Activated CD8-positive, alpha-beta T cell treated with anti-CD3 and anti-CD28 coated beads for 36 hours (primary cell): ENCODE measurements at regions of chr7 and their contacts with region 1.

Region 1: DNA sequence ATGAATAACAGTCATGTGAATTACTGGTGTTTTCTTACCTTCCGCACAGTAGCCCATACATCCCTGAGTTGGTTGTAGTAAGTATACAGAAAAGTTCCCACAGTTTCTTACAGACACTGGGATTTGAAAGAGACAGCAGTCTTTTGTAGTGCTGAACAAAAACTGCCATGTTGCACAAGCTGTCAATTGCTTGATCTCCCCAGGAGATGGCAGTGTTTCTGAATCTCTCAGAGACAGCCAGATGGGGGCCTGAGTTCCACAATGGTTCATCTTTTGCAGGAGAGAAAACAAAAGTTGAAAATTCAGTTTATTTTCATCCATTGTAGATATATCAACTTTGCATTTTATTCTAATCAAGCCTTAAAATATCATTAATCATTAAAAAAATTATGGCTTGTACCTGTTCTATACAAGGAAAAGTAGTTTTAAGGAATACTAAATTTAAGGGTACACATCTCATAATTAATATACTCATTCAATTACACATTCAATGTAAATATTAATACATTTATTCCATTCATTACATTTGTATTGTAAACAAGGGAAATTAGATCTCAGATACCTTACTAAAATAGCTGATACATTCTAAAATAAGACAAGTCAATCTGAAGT is 14.5 kb downstream of the VWDE start:
- DNase-seq: peak; percentile 62
- ATAC-seq: peak; percentile 94
- H3K4me3 Mint-ChIP-seq: no peak overlapping the region
- H3K27ac Mint-ChIP-seq: no peak overlapping the region
- H3K4me1 Mint-ChIP-seq: no peaks in the 10 kb centered on the region
- H3K27me3 Mint-ChIP-seq: no peaks in the 10 kb centered on the region
- CTCF ChIP-seq: peak; percentile 81

Region 2: DNA sequence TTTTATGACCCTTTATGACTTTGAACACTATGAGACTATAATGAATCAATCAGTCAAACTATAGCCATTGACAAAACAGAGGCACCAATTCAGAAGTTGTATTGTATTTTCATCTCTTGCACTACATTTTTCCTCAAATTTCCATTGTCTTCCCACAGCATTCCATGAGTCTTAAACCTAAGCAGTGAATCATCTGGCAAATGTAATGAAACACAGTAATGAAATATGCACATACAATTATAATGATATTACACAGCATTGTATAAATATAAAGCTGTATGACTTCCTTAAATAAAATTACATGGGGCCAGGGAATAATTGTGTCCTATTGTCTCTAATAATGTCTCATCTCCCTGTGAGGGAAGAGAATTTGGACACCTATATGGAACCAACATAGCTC is 30.5 kb before region 1 on chr7:
- CTCF ChIA-PET with region 1: interaction called, 11 read pairs
- POLR2A ChIA-PET with region 1: no interaction called
- intact Hi-C with region 1: no loop called
- DNase-seq: no peak
- ATAC-seq: no peak
- H3K4me3 Mint-ChIP-seq: no peak overlapping the region
- H3K27ac Mint-ChIP-seq: no peak overlapping the region
- H3K4me1 Mint-ChIP-seq: no peaks in the 10 kb centered on the region
- H3K27me3 Mint-ChIP-seq: no peaks in the 10 kb centered on the region
- CTCF ChIP-seq: no peak

Region 3: GRCh38 chr7:12378389-12378788 is 10.8 kb before region 1 on chr7:
- CTCF ChIA-PET with region 1: interaction called, 12 read pairs
- POLR2A ChIA-PET with region 1: no interaction called
- intact Hi-C with region 1: no loop called
- DNase-seq: no peak
- ATAC-seq: no peak
- H3K4me3 Mint-ChIP-seq: no peak overlapping the region
- H3K27ac Mint-ChIP-seq: no peak overlapping the region
- H3K4me1 Mint-ChIP-seq: no peaks in the 10 kb centered on the region
- H3K27me3 Mint-ChIP-seq: no peaks in the 10 kb centered on the region
- CTCF ChIP-seq: no peak

Region 4: DNA sequence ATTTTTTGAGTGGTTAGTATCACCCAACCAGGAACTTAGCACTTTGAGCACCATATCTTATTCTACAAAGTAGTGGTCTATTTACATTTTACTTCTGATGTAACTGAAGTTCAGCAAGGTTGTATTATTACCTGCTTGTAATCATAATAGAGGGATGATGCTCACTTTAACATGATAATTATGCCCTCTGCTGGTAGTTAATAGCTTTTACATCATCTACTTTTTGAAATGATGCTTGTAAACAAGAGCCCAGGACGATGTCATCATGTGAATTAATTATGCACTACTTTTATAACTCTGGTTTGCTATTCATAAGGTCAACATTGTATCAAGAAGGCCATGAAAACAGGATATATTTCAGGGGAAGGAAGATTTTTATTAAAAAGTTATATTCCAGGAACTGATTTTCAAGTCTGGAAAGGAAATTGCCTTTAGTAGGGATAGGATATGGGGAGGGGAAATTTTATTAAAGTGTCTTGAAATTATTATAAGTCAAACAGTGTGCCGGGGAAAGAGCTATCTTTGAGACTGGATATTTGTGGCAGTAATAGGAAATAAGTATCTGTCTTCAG is 101.0 kb after region 1 on chr7:
- CTCF ChIA-PET with region 1: interaction called, 13 read pairs
- POLR2A ChIA-PET with region 1: no interaction called
- intact Hi-C with region 1: loop called (anchors 10 kb)
- DNase-seq: no peak
- ATAC-seq: peak; percentile 64
- H3K4me3 Mint-ChIP-seq: no peak overlapping the region
- H3K27ac Mint-ChIP-seq: no peak overlapping the region
- H3K4me1 Mint-ChIP-seq: no peaks in the 10 kb centered on the region
- H3K27me3 Mint-ChIP-seq: peaks cover 5% of the 10 kb centered on the region
- CTCF ChIP-seq: peak; percentile 56

Region 5: GRCh38 chr7:12715372-12716133 is 326.4 kb after region 1 on chr7:
- CTCF ChIA-PET with region 1: no interaction called
- POLR2A ChIA-PET with region 1: no interaction called
- intact Hi-C with region 1: no loop called
- DNase-seq: peak; percentile 73
- ATAC-seq: peak; percentile 94
- H3K4me3 Mint-ChIP-seq: peak overlapping the region; percentile 8
- H3K27ac Mint-ChIP-seq: peak overlapping the region; percentile 55
- H3K4me1 Mint-ChIP-seq: peaks cover 38% of the 10 kb centered on the region
- H3K27me3 Mint-ChIP-seq: no peaks in the 10 kb centered on the region
- CTCF ChIP-seq: no peak